Endothelial cell of umbilical vein (primary cell): ENCODE measurements at regions of chr15 and their contacts with region 1.

Region 1: DNA sequence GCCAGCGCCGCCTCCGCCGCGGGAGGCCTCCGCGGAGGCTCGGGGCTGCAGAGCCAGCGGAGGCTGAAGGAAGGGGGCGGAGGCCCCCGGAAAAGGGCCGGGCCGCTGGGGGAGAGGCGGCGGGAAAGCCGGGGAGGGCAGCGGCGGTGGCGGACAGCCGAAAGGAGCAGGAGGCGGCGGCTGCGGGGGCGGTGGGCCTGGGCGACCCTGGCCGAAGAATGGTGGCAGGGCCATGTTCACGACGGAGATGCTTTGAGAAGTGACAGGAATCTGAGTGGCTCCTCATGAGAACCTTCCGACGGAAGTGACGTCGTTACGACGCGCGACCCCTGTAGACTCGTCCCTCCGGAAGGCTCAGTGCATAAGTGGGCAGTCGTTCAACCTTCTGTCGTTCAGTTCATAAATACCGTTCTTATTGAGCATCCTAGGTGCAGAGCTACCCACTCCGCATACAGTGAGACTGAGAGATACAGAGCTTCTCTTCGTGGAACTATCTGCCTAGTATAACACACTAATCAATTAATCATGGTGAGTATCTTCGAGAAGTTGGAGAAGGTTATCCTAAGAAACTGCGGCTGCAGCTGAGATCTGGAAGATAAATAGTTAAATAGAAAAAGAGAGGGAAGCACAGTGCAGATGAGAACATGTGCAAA is at the start of gene PDCD7:
- DNase-seq: peak; percentile 89
- H3K4me3 ChIP-seq: peak within 1 kb of the TSS; percentile 29 to 94 (median 72)
- H3K27ac ChIP-seq: peak within 1 kb of the TSS; percentile 46
- H3K4me1 ChIP-seq: peaks cover 10% of the 10 kb centered on the region
- H3K27me3 ChIP-seq: no peaks in the 10 kb centered on the region
- CTCF ChIP-seq: no peak
- POLR2A ChIP-seq: peak; percentile 91
- total RNA-seq, gene PDCD7: 19.5 and 26.6 TPM in 2 replicates

Region 2: GRCh38 chr15:65049418-65049840 is 84.2 kb before region 1 on chr15:
- CTCF ChIA-PET with region 1: no interaction called
- POLR2A ChIA-PET with region 1: no interaction called
- dilution Hi-C with region 1: no loop called
- intact Hi-C with region 1: loop called (anchors 1 kb)
- DNase-seq: peak; percentile 92
- H3K4me3 ChIP-seq: peak overlapping the region; percentile 2 to 35 (median 22)
- H3K27ac ChIP-seq: no peak overlapping the region
- H3K4me1 ChIP-seq: peaks cover 11% of the 10 kb centered on the region
- H3K27me3 ChIP-seq: no peaks in the 10 kb centered on the region
- CTCF ChIP-seq: no peak
- POLR2A ChIP-seq: no peak

Region 3: GRCh38 chr15:65069179-65069578 is 64.5 kb before region 1 on chr15:
- CTCF ChIA-PET with region 1: no interaction called
- POLR2A ChIA-PET with region 1: no interaction called
- dilution Hi-C with region 1: no loop called
- intact Hi-C with region 1: no loop called
- DNase-seq: no peak
- H3K4me3 ChIP-seq: no peak overlapping the region
- H3K27ac ChIP-seq: no peak overlapping the region
- H3K4me1 ChIP-seq: no peaks in the 10 kb centered on the region
- H3K27me3 ChIP-seq: peaks cover 31 to 41% of the 10 kb centered on the region in 2 experiments
- CTCF ChIP-seq: no peak
- POLR2A ChIP-seq: no peak

Region 4: GRCh38 chr15:65550681-65551098 is 417.0 kb after region 1 on chr15:
- CTCF ChIA-PET with region 1: no interaction called
- POLR2A ChIA-PET with region 1: no interaction called
- dilution Hi-C with region 1: no loop called
- intact Hi-C with region 1: no loop called
- DNase-seq: peak; percentile 40
- H3K4me3 ChIP-seq: no peak overlapping the region
- H3K27ac ChIP-seq: no peak overlapping the region
- H3K4me1 ChIP-seq: peaks cover 2% of the 10 kb centered on the region
- H3K27me3 ChIP-seq: no peaks in the 10 kb centered on the region
- CTCF ChIP-seq: no peak
- POLR2A ChIP-seq: no peak